GM12878 (cell line): ENCODE measurements at regions of chr5 and their contacts with region 1.

Region 1: GRCh38 chr5:173895401-173896165 is 7.4 kb downstream of the CPEB4 start:
- DNase-seq: no peak
- ATAC-seq: peak; percentile 1; the same call in 1 of the 3 replicates
- H3K4me3 ChIP-seq: peak overlapping the region; percentile 54
- H3K27ac ChIP-seq: peak overlapping the region; percentile 65
- H3K4me1 ChIP-seq: peaks cover 3% of the 10 kb centered on the region; the same call in 1 of the 2 replicates
- H3K27me3 ChIP-seq: no peaks in the 10 kb centered on the region
- CTCF ChIP-seq: no peak
- EP300 ChIP-seq: no peak
- POLR2A ChIP-seq: no peak
- RAD21 ChIP-seq: no peak

Region 2: GRCh38 chr5:173848986-173849596 is 46.5 kb before region 1 on chr5:
- CTCF ChIA-PET with region 1: no interaction called
- POLR2A ChIA-PET with region 1: no interaction called
- RAD21 ChIA-PET with region 1: no interaction called
- SMC1A ChIA-PET with region 1: no interaction called
- in situ Hi-C with region 1: no loop called
- intact Hi-C with region 1: no loop called
- DNase-seq: no peak
- ATAC-seq: no peak
- H3K4me3 ChIP-seq: no peak overlapping the region
- H3K27ac ChIP-seq: no peak overlapping the region
- H3K4me1 ChIP-seq: no peaks in the 10 kb centered on the region
- H3K27me3 ChIP-seq: no peaks in the 10 kb centered on the region
- CTCF ChIP-seq: no peak
- EP300 ChIP-seq: no peak
- POLR2A ChIP-seq: no peak
- RAD21 ChIP-seq: no peak

Region 3: DNA sequence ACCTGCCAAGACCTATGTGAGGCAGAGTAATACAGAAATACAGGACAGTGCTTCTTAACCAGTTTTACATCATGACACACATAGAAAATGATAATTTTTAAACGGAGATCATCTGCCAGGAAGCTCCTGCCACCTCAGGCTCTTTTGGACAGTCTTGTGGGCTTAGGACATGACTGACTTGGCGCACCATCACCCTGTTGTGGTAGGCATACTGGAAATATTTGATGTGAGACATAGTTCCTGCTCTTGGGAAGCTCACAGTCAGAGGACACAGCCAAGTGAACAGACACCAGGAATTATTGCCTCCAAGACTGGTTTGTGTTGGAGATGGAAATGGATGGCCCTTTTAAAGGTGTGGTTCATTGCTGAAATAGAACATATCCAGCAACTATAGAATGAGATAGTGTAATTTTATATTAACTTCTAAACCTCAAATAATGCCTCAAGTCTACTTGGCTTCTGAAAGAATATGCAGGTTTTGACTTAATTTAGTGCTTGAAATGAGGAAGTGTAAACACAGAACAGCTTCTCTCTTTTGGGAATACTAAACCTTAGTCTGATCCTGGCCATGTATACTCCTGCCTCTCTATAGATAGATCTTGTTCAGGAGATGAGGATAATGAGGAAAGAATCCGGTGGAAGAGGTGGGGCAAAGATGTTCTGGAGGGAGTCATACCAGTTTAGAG is 12.2 kb after region 1 on chr5:
- CTCF ChIA-PET with region 1: interaction called, 36 read pairs
- POLR2A ChIA-PET with region 1: interaction called, 105 read pairs
- RAD21 ChIA-PET with region 1: interaction called, 142 read pairs
- SMC1A ChIA-PET with region 1: interaction called, 361 read pairs
- in situ Hi-C with region 1: no loop called
- intact Hi-C with region 1: no loop called
- DNase-seq: no peak
- ATAC-seq: peak; percentile 38
- H3K4me3 ChIP-seq: no peak overlapping the region
- H3K27ac ChIP-seq: peak overlapping the region; percentile 60
- H3K4me1 ChIP-seq: peaks cover 31% of the 10 kb centered on the region
- H3K27me3 ChIP-seq: no peaks in the 10 kb centered on the region
- CTCF ChIP-seq: no peak
- EP300 ChIP-seq: no peak
- POLR2A ChIP-seq: no peak
- RAD21 ChIP-seq: no peak